ENCODE measurements at regions of chr4 and their contacts with region 1.

Region 1: DNA sequence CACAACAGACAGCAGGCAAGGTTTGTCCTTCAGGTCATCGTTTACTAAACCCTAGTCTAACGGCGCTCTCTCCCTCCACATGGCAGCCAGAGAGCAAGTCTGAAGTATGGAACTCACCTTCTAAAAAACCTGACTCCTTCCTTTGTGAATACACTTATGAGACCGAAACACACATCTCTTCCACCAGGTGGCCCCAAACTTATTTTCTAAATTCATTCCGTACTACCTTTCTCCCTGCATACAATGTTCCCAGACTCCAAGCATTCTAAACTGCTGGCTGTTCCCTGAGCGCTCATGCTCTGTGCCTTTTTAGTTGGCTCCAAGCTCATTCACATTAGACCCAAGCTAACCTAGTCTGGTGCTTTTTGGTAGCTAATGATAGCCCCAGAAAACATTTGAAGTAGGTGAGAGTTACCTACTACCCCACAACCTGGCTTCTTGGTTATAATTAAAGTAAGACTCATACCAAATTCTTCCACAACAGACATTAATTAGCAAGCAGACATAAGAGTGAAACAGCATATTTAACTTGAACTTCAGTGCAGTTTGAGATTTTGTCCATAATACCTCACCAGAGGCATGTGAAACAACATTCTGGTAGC is 67.6 kb upstream of the DCLK2 start:
- DNase-seq: peak; percentile 27
- H3K4me3 ChIP-seq: no peak overlapping the region
- H3K27ac ChIP-seq: no peak overlapping the region
- H3K4me1 ChIP-seq: peaks cover 0 to 4% (median 0%) of the 10 kb centered on the region in 4 donors
- H3K27me3 ChIP-seq: no peaks in the 10 kb centered on the region
- CTCF ChIP-seq: peak; percentile 51 to 69 (median 51)
- EP300 ChIP-seq: no peak
- POLR2A ChIP-seq: no peak

Region 2: DNA sequence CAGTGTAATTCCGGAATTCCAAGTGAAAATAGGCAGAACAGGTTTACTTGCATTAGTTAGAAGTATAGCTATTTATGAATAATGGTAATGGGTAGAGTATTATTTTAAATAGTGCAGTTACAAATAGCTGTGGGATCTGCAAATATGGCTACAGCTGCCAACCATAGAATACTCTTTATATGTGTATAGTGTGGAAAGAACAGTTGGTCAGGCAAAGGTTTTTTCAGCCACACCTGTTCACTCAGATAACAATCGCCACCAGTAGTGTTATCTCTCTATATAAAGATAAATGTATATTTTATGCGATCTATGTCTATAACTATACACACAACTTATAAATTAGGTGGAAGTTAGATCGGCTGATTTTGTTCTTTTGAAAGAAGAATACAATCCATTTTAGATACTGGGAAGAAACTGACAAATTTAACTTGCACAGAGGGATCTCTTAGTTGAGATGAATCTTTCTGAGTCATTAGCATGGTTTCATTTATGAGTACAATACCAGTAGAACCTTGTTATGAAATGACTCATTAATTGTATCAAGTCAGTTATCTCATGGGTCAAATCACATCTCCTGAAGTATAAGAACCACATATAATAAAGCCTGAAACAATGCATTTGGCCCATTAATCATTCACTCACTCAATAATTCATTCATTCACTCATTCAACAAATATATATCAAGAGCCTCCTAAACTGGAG is 1467.6 kb before region 1 on chr4:
- in situ Hi-C with region 1: no loop called
- intact Hi-C with region 1: no loop called
- DNase-seq: no peak
- H3K4me3 ChIP-seq: no peak overlapping the region
- H3K27ac ChIP-seq: peak overlapping the region; percentile 18 to 59 (median 44)
- H3K4me1 ChIP-seq: peaks cover 0 to 44% (median 14%) of the 10 kb centered on the region in 4 donors
- H3K27me3 ChIP-seq: no peaks in the 10 kb centered on the region
- CTCF ChIP-seq: no peak
- EP300 ChIP-seq: no peak
- POLR2A ChIP-seq: no peak

Region 3: GRCh38 chr4:149511558-149512298 is 498.9 kb before region 1 on chr4:
- in situ Hi-C with region 1: no loop called
- intact Hi-C with region 1: no loop called
- DNase-seq: no peak
- H3K4me3 ChIP-seq: no peak overlapping the region
- H3K27ac ChIP-seq: no peak overlapping the region
- H3K4me1 ChIP-seq: no peaks in the 10 kb centered on the region
- H3K27me3 ChIP-seq: no peaks in the 10 kb centered on the region
- CTCF ChIP-seq: no peak
- EP300 ChIP-seq: no peak
- POLR2A ChIP-seq: no peak

Region 4: DNA sequence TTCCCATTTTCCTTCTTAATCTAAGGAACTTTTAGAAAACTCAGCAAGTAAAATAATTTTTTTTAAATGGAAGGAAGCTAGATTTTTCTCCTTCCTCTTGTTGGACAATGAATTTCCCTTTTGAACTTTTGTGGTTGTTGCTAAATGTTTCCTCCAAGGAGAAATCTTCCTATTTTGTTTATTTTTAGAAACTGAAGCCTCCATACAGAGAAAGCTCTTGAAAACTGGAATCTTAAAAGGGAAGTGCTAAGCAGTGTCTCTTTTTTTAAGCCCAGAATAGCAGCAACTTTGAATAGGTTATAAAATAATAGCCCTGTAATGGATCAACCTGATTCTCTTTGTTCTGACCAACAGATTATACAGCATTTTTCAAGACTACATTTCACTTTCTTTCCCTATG is 52.5 kb after region 1 on chr4:
- in situ Hi-C with region 1: no loop called
- intact Hi-C with region 1: loop called (anchors 10 kb)
- DNase-seq: no peak
- H3K4me3 ChIP-seq: no peak overlapping the region
- H3K27ac ChIP-seq: no peak overlapping the region
- H3K4me1 ChIP-seq: no peaks in the 10 kb centered on the region
- H3K27me3 ChIP-seq: no peaks in the 10 kb centered on the region
- CTCF ChIP-seq: no peak
- EP300 ChIP-seq: no peak
- POLR2A ChIP-seq: no peak

Region 5: DNA sequence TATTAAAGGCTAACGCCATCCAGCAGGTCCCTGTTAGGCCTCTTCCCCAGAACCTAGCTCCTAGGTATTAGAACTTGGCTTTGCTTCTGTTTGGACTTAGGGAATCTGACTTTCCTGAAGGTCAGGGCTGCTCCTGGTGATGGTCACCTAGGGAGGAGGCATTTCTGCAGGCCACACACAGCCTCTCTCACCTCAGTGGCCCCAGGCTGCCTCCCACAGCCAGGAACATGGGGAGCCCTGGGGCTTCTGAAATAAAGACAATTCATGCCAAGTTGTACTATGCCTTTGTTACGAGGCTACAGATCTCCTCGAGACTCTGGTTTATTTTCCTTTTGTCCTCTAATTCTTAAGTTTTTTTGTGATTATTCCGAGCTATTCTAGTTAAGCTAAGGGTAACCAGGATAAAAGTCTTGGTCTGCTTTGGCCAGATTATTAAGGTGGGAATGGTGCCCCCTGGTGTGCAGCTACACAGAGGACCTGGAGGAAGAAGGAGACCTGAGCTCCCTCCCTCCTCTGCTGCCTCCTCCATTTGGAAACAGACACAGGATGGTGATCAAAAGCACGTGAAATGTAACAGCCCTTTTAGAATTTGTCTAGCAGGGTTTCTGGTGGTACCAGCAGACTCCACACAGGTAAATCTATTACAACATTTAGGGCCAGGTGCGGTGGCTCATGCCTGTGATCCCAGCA is 198.7 kb after region 1 on chr4:
- in situ Hi-C with region 1: loop called (anchors 10 to 25 kb)
- intact Hi-C with region 1: loop called (anchors 10 kb)
- DNase-seq: peak; percentile 69
- H3K4me3 ChIP-seq: no peak overlapping the region
- H3K27ac ChIP-seq: no peak overlapping the region
- H3K4me1 ChIP-seq: no peaks in the 10 kb centered on the region
- H3K27me3 ChIP-seq: no peaks in the 10 kb centered on the region
- CTCF ChIP-seq: peak; percentile 40 to 67 (median 51)
- EP300 ChIP-seq: no peak
- POLR2A ChIP-seq: no peak

Region 6: GRCh38 chr4:150619042-150619441 is 608.4 kb after region 1 on chr4:
- in situ Hi-C with region 1: no loop called
- intact Hi-C with region 1: no loop called
- DNase-seq: no peak
- H3K4me3 ChIP-seq: no peak overlapping the region
- H3K27ac ChIP-seq: no peak overlapping the region
- H3K4me1 ChIP-seq: peaks cover 0 to 7% (median 0%) of the 10 kb centered on the region in 4 donors
- H3K27me3 ChIP-seq: no peaks in the 10 kb centered on the region
- CTCF ChIP-seq: no peak
- EP300 ChIP-seq: no peak
- POLR2A ChIP-seq: no peak